Mammary epithelial cell (primary cell): ENCODE measurements at regions of chr5 and their contacts with region 1.

Region 1: GRCh38 chr5:78537821-78538220 is 110.8 kb downstream of the LHFPL2 start:
- DNase-seq: peak; percentile 91
- H3K4me3 ChIP-seq: no peak overlapping the region
- H3K27ac ChIP-seq: peak overlapping the region; percentile 56
- H3K4me1 ChIP-seq: peaks cover 37% of the 10 kb centered on the region
- H3K27me3 ChIP-seq: no peaks in the 10 kb centered on the region
- CTCF ChIP-seq: peak; percentile 57 to 58

Region 2: GRCh38 chr5:77798456-77798855 is 739.4 kb before region 1 on chr5:
- CTCF ChIA-PET with region 1: no interaction called
- dilution Hi-C with region 1: no loop called
- in situ Hi-C with region 1: no loop called
- intact Hi-C with region 1: no loop called
- DNase-seq: no peak
- H3K4me3 ChIP-seq: no peak overlapping the region
- H3K27ac ChIP-seq: no peak overlapping the region
- H3K4me1 ChIP-seq: no peaks in the 10 kb centered on the region
- H3K27me3 ChIP-seq: peaks cover 12% of the 10 kb centered on the region
- CTCF ChIP-seq: no peak

Region 3: DNA sequence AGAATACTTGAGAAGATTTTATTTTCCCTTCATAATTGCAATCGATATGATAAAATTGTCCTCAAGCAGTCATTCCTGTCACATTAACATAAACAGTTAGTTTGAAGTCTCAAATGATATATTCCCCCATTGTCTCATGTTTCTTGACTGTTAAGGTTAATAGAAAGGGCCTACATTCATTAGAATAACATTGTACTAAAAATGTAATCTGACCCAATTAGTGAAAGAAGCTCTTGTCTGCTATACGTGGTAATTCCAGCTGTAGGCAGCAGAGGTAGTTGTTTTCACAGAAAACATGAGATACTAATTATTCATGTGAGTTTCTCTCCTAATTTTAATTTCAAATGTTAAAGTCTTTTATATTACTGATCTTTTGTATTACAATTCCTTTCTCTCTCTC is 217.4 kb before region 1 on chr5:
- CTCF ChIA-PET with region 1: interaction called, 5 read pairs
- dilution Hi-C with region 1: no loop called
- in situ Hi-C with region 1: loop called in 1 of 2 experiments (anchors 10 kb)
- intact Hi-C with region 1: loop called (anchors 5 kb)
- DNase-seq: peak; percentile 29
- H3K4me3 ChIP-seq: no peak overlapping the region
- H3K27ac ChIP-seq: no peak overlapping the region
- H3K4me1 ChIP-seq: no peaks in the 10 kb centered on the region
- H3K27me3 ChIP-seq: no peaks in the 10 kb centered on the region
- CTCF ChIP-seq: peak; percentile 72 to 75

Region 4: GRCh38 chr5:78359831-78360673 is 177.8 kb before region 1 on chr5 and contains the start of gene SCAMP1:
- CTCF ChIA-PET with region 1: no interaction called
- dilution Hi-C with region 1: no loop called
- in situ Hi-C with region 1: no loop called
- intact Hi-C with region 1: loop called (anchors 5 kb)
- DNase-seq: peak; percentile 94
- H3K4me3 ChIP-seq: peak within 1 kb of the TSS; percentile 95 to 100 (median 96)
- H3K27ac ChIP-seq: peak within 1 kb of the TSS; percentile 76
- H3K4me1 ChIP-seq: no peaks in the 10 kb centered on the region
- H3K27me3 ChIP-seq: no peaks in the 10 kb centered on the region
- CTCF ChIP-seq: peak; percentile 5 to 42
- total RNA-seq, gene SCAMP1: 48.8 to 126 TPM

Region 5: DNA sequence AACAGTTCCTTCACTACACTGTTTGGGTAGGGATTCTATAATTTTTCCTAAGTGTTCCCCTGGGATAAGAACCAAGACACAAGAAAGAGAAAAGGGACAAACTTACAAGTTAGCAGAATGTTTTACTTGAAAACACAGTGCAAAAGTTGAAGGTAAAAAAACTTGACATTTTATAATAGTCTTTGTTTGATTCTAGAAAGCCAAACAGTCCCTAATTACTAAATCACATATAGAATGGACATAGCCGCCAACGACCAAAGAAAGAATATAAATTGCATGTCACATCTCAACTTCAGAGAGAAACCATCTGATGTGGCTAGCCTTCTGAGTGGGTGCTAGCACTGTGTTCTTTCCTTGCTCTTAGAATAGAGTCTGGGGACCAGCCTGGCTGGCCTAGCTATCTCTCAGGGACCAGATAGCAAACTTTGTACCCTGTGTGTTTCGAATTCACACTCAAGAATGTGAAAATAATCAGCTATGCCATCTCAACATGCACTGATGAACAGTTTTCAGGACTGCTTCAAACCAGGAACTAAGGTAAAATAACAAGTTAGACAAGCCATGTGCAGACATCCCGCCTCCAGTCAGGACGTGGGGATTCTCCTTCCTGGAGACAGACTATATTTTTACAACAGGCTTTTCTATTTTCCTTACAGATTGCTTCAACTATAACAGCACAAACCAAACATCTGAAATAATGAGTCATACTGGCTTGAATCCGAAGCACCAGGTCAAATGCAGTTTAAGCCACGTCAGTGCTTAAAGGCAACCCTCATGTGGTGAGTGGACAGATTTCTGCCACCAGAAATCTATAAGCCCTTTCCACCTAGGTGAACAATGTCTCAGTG is 57.0 kb after region 1 on chr5:
- CTCF ChIA-PET with region 1: no interaction called
- dilution Hi-C with region 1: no loop called
- in situ Hi-C with region 1: no loop called
- intact Hi-C with region 1: loop called (anchors 5 kb)
- DNase-seq: peak; percentile 96
- H3K4me3 ChIP-seq: no peak overlapping the region
- H3K27ac ChIP-seq: peak overlapping the region; percentile 90
- H3K4me1 ChIP-seq: peaks cover 63% of the 10 kb centered on the region
- H3K27me3 ChIP-seq: no peaks in the 10 kb centered on the region
- CTCF ChIP-seq: peak in 1 of 2 donors; percentile 3

Region 6: DNA sequence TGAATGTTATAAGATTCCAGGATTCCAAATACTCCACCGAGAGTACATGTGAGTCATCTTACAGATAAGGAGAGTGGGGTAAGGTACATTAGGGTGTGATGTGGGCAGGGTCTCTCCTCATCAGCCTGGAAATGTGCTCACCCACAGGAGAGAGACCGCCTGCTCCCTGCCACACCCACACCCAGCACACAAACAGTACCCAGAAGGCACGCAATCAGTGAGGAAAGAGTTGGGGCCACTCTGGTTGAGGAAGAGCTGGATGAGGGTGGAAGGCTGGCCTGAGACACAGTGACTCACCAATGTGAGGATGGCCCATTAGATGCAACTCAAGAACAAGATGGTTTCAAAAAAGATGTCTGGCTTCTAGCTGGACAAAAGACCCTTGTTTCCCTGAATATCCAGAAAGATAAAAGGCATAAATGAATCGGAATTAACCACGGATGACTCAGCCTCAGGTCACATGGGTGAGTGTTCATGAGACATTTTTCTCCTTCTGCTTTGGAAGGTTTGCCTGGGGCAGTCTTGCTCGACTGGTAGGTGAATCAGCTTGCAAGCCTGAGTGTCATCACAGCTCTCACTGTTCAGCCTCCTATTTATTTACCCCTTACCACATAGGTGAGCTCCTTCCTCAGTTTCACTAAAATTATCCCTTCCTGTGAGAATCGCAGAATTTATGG is 161.9 kb after region 1 on chr5:
- CTCF ChIA-PET with region 1: no interaction called
- dilution Hi-C with region 1: no loop called
- in situ Hi-C with region 1: no loop called
- intact Hi-C with region 1: loop called (anchors 5 kb)
- DNase-seq: peak; percentile 100
- H3K4me3 ChIP-seq: peak overlapping the region in 1 of 3 experiments; percentile 6
- H3K27ac ChIP-seq: peak overlapping the region; percentile 97
- H3K4me1 ChIP-seq: peaks cover 32% of the 10 kb centered on the region
- H3K27me3 ChIP-seq: no peaks in the 10 kb centered on the region
- CTCF ChIP-seq: no peak

Region 7: DNA sequence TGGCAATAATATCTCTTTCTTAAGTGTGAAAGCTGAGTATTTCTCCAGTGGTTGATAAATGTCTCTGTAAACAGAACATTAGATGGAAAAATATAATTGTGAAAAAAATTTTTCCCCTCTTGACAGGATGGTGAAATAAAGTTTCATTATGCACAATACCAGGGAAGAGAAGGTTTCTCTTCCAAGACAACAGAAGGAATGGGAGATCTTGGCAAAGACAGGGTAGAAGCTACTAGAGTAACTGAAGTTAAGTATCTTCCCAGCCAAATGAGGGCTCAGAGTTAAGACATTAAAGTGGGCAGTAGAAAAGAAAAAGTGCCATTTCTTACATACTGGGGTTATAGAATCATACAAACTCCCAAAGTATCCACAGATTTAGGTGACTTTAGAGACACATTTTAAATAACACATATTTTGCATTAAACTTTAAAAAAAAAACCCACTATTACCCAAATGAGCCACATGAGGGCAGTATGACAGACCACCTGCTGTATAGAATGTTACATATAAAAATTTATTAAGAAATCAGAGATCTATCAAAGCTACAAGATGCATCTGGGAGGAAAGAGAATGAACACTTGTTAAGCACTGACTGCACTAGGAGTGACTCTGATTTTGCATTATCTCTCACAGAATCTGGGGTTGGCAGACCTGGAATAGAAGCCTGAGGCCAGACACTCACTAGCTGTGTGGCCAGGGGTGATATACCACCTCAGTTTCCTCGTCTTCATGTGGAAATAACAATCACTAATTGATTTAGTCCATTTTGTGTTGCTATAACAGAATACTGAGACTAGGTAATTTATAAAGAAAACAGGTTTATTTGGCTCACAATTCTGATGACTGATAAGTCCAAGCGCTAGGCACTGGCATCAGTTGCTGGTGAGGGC is 348.8 kb after region 1 on chr5:
- CTCF ChIA-PET with region 1: no interaction called
- dilution Hi-C with region 1: no loop called
- in situ Hi-C with region 1: no loop called
- intact Hi-C with region 1: loop called (anchors 2 kb)
- DNase-seq: no peak
- H3K4me3 ChIP-seq: no peak overlapping the region
- H3K27ac ChIP-seq: no peak overlapping the region
- H3K4me1 ChIP-seq: peaks cover 3% of the 10 kb centered on the region
- H3K27me3 ChIP-seq: no peaks in the 10 kb centered on the region
- CTCF ChIP-seq: peak; percentile 49 to 53

Region 8: GRCh38 chr5:78964887-78965286 is 427.1 kb after region 1 on chr5:
- CTCF ChIA-PET with region 1: no interaction called
- dilution Hi-C with region 1: no loop called
- in situ Hi-C with region 1: no loop called
- intact Hi-C with region 1: loop called (anchors 5 kb)
- DNase-seq: peak; percentile 45
- H3K4me3 ChIP-seq: no peak overlapping the region
- H3K27ac ChIP-seq: no peak overlapping the region
- H3K4me1 ChIP-seq: no peaks in the 10 kb centered on the region
- H3K27me3 ChIP-seq: no peaks in the 10 kb centered on the region
- CTCF ChIP-seq: peak; percentile 18 to 61